ENCODE measurements at regions of chr1 and their contacts with region 1.

Region 1: GRCh38 chr1:104182251-104182650 is 432.6 kb downstream of the AMY1C start:
- DNase-seq: no peak
- ATAC-seq: no peak
- H3K4me3 ChIP-seq: no peak overlapping the region
- H3K27ac ChIP-seq: no peak overlapping the region
- H3K4me1 ChIP-seq: no peaks in the 10 kb centered on the region
- H3K27me3 ChIP-seq: no peaks in the 10 kb centered on the region
- CTCF ChIP-seq: no peak

Region 2: GRCh38 chr1:104238991-104239390 is 56.7 kb after region 1 on chr1:
- CTCF ChIA-PET with region 1: no interaction called
- POLR2A ChIA-PET with region 1: interaction called, 14 read pairs
- in situ Hi-C with region 1: no loop called
- intact Hi-C with region 1: no loop called
- DNase-seq: no peak
- ATAC-seq: no peak
- H3K4me3 ChIP-seq: no peak overlapping the region
- H3K27ac ChIP-seq: no peak overlapping the region
- H3K4me1 ChIP-seq: no peaks in the 10 kb centered on the region
- H3K27me3 ChIP-seq: no peaks in the 10 kb centered on the region
- CTCF ChIP-seq: no peak